Activated CD4-positive, alpha-beta memory T cell treated with anti-CD3 and anti-CD28 coated beads for 36 hours (primary cell): ENCODE measurements at regions of chr11 and their contacts with region 1.

Region 1: GRCh38 chr11:78416305-78417178 is 1.1 kb downstream of the GAB2 start:
- DNase-seq: peak; percentile 89
- H3K4me3 Mint-ChIP-seq: peak overlapping the region; percentile 80
- H3K27ac Mint-ChIP-seq: peak overlapping the region; percentile 52
- H3K4me1 Mint-ChIP-seq: peaks cover 28% of the 10 kb centered on the region
- H3K27me3 Mint-ChIP-seq: peaks cover 19% of the 10 kb centered on the region

Region 2: DNA sequence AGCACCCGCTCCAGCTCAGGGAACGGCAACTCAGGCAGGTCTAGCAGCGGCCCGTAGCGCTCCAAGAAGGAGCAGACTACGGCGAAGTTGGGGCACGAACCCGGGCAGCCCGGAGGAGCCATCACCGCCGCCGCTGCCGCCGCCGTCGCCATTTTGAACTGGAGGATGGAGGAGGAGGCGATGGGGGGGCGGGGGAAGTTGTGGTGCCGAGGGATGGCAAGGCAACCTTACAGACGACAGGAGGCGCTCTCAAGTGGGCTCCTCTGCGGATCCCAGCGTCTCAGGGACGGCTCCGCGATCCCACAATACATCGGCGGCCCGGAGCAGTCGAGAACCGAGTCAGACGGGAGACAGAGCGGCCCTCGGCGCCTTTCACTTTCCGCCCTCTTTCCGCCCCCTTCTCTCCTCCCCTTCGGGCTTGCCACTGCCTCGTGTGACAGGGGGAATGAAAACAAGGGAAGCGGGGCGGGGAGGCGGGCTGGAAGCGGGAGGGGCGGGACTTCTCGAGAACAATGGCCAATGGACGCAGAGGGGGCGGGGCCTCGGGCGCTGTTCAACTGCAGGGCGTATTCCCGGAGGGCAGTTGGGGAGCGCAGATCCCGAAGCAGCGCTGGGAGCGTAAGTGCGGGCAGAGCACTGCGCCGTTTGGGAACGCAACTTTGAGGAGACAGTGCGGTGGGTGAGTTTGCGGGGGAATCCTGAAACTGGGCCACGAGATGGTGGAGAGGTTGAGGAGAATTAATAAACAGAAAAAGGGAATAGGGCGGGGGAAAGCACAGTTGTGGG is 595.8 kb before region 1 on chr11 and contains the starts of genes AAMDC and RSF1:
- CTCF ChIA-PET with region 1: no interaction called
- POLR2A ChIA-PET with region 1: no interaction called
- intact Hi-C with region 1: loop called (anchors 5 kb)
- DNase-seq: peak; percentile 98
- H3K4me3 Mint-ChIP-seq: peak within 1 kb of the TSS; percentile 97
- H3K27ac Mint-ChIP-seq: peak within 1 kb of the TSS; percentile 98
- H3K4me1 Mint-ChIP-seq: peaks cover 34% of the 10 kb centered on the region
- H3K27me3 Mint-ChIP-seq: no peaks in the 10 kb centered on the region
- total RNA-seq, gene AAMDC: 9.5 to 10.0 TPM
- total RNA-seq, gene RSF1: 48.7 to 52.9 TPM

Region 3: DNA sequence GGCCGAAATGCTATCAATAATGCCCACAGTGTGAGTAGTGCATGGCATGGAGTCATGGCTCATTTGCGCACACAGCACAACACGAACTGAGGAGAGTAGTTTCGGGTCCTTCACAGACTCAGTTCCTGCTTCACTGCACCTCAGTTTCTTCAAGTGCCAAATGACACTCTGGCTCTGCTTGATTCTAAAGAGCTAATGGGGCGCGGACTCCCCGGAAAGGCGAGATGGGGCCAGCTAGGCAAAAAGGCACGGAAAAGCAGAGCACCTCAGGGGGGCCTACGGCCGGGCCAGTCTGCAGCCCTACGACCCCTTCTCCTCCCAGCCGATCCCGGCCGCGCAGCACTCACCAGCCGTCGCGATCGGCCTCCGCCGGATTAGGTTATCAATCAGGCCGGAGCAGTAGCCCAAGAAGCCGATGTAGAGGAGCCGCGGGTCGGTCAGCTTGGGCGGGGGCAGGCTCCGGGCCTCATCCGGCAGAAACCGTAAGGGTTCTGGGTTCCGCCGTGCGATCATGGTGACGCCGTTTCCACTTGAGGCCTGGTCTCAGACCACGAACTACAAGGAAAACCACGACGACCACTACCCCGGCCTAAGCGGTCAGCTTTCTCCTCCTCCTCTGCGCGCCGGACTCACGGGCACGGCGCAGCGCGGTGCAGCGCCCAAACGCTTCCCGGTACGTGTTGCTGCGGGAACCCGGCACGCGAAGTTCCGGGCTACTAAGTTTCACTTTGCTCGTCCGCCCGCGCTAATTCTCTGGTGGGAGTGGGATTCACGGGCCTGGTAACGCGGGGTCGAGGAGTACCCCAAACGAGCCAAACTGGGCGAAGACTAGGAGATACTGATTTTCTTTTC is 337.1 kb before region 1 on chr11 and contains the start of gene NDUFC2:
- CTCF ChIA-PET with region 1: no interaction called
- POLR2A ChIA-PET with region 1: no interaction called
- intact Hi-C with region 1: loop called (anchors 5 kb)
- DNase-seq: peak; percentile 77
- H3K4me3 Mint-ChIP-seq: peak within 1 kb of the TSS; percentile 91
- H3K27ac Mint-ChIP-seq: peak within 1 kb of the TSS; percentile 83
- H3K4me1 Mint-ChIP-seq: peaks cover 40% of the 10 kb centered on the region
- H3K27me3 Mint-ChIP-seq: no peaks in the 10 kb centered on the region
- total RNA-seq, gene NDUFC2: 209 to 230 TPM

Region 4: GRCh38 chr11:78188286-78189173 is 228.0 kb before region 1 on chr11 and contains the starts of genes KCTD21 and USP35:
- CTCF ChIA-PET with region 1: interaction called, 3 read pairs
- POLR2A ChIA-PET with region 1: interaction called, 5 read pairs
- intact Hi-C with region 1: loop called (anchors 1 kb)
- DNase-seq: peak; percentile 95
- H3K4me3 Mint-ChIP-seq: peak within 1 kb of the TSS; percentile 98
- H3K27ac Mint-ChIP-seq: peak within 1 kb of the TSS; percentile 98
- H3K4me1 Mint-ChIP-seq: peaks cover 57% of the 10 kb centered on the region
- H3K27me3 Mint-ChIP-seq: no peaks in the 10 kb centered on the region
- total RNA-seq, gene KCTD21: 7.9 to 8.8 TPM
- total RNA-seq, gene USP35: 9.3 to 9.6 TPM

Region 5: GRCh38 chr11:78290293-78291176 is 126.0 kb before region 1 on chr11:
- CTCF ChIA-PET with region 1: no interaction called
- POLR2A ChIA-PET with region 1: interaction called, 3 read pairs
- intact Hi-C with region 1: loop called (anchors 5 kb)
- DNase-seq: peak; percentile 33
- H3K4me3 Mint-ChIP-seq: peak overlapping the region; percentile 2
- H3K27ac Mint-ChIP-seq: peak overlapping the region; percentile 83
- H3K4me1 Mint-ChIP-seq: peaks cover 34% of the 10 kb centered on the region
- H3K27me3 Mint-ChIP-seq: no peaks in the 10 kb centered on the region

Region 6: DNA sequence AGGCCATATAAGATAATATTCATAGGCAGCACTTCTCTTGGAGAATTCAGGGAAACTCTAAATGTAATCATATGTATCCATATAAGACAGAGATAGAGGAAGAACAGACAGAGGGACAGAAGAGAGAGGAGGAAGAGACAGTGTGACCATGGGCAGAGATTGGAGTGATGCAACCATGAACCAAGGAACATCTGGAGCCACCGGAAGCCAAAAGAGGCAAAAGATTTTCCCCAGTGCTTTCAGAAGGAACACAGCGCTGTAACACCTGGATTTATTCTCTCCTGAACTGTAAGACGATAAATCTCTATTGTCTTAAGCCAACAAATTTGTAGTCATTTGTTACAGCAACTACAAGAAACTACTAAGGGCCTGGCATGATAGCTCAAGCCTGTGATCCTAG is 56.6 kb before region 1 on chr11:
- CTCF ChIA-PET with region 1: no interaction called
- POLR2A ChIA-PET with region 1: no interaction called
- intact Hi-C with region 1: no loop called
- DNase-seq: no peak
- H3K4me3 Mint-ChIP-seq: no peak overlapping the region
- H3K27ac Mint-ChIP-seq: no peak overlapping the region
- H3K4me1 Mint-ChIP-seq: no peaks in the 10 kb centered on the region
- H3K27me3 Mint-ChIP-seq: no peaks in the 10 kb centered on the region

Region 7: GRCh38 chr11:78370406-78371172 is 46.0 kb before region 1 on chr11:
- CTCF ChIA-PET with region 1: no interaction called
- POLR2A ChIA-PET with region 1: no interaction called
- intact Hi-C with region 1: no loop called
- DNase-seq: no peak
- H3K4me3 Mint-ChIP-seq: no peak overlapping the region
- H3K27ac Mint-ChIP-seq: no peak overlapping the region
- H3K4me1 Mint-ChIP-seq: no peaks in the 10 kb centered on the region
- H3K27me3 Mint-ChIP-seq: no peaks in the 10 kb centered on the region

Region 8: GRCh38 chr11:78432058-78432515 is 15.5 kb after region 1 on chr11:
- CTCF ChIA-PET with region 1: interaction called, 49 read pairs
- POLR2A ChIA-PET with region 1: no interaction called
- intact Hi-C with region 1: no loop called
- DNase-seq: no peak
- H3K4me3 Mint-ChIP-seq: no peak overlapping the region
- H3K27ac Mint-ChIP-seq: no peak overlapping the region
- H3K4me1 Mint-ChIP-seq: peaks cover 21% of the 10 kb centered on the region
- H3K27me3 Mint-ChIP-seq: no peaks in the 10 kb centered on the region

Region 9: GRCh38 chr11:78574386-78575381 is 158.1 kb after region 1 on chr11 and contains the start of gene NARS2:
- CTCF ChIA-PET with region 1: interaction called, 14 read pairs
- POLR2A ChIA-PET with region 1: no interaction called
- intact Hi-C with region 1: no loop called
- DNase-seq: peak; percentile 99
- H3K4me3 Mint-ChIP-seq: peak within 1 kb of the TSS; percentile 96
- H3K27ac Mint-ChIP-seq: peak within 1 kb of the TSS; percentile 92
- H3K4me1 Mint-ChIP-seq: peaks cover 21% of the 10 kb centered on the region
- H3K27me3 Mint-ChIP-seq: no peaks in the 10 kb centered on the region
- total RNA-seq, gene NARS2: 22.7 to 24.6 TPM